Panc1 (cell line): ENCODE measurements at regions of chr12 and their contacts with region 1.

Region 1: GRCh38 chr12:32062881-32063280 is 43.8 kb upstream of the BICD1 start:
- DNase-seq: no peak
- ATAC-seq: no peak
- H3K4me3 ChIP-seq: no peak overlapping the region
- H3K27ac ChIP-seq: no peak overlapping the region
- H3K4me1 ChIP-seq: no peaks in the 10 kb centered on the region
- H3K27me3 ChIP-seq: no peaks in the 10 kb centered on the region
- CTCF ChIP-seq: no peak

Region 2: GRCh38 chr12:31651893-31652521 is 410.9 kb before region 1 on chr12:
- CTCF ChIA-PET with region 1: interaction called, 11 read pairs
- POLR2A ChIA-PET with region 1: no interaction called
- in situ Hi-C with region 1: no loop called
- intact Hi-C with region 1: no loop called
- DNase-seq: no peak
- ATAC-seq: no peak
- H3K4me3 ChIP-seq: peak overlapping the region in 1 of 2 experiments; percentile 27; a peak in 1 of 4 replicates
- H3K27ac ChIP-seq: peak overlapping the region; percentile 72; the same call in 1 of the 2 replicates
- H3K4me1 ChIP-seq: 0 out of 2 replicates have a peak, but pooled peaks cover 3% of the 10 kb centered on the region
- H3K27me3 ChIP-seq: no peaks in the 10 kb centered on the region
- CTCF ChIP-seq: no peak

Region 3: DNA sequence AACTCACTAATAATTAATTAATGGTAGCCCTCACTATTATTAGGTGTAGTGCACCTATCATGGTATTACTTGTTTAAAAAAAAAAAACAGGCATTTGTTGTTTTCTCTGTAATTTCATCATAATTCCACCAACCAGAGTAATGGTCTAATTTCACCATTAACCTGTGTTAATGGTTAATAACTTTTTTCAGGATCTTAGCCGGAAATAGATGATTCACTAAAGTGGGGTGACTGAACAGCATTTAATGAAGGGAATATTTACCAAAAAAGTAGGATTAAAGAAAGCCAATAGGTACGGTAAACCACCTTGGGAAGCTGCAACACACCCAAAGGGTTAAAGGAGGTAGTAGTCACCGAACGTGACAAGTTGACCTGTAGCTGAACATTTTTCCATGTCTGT is 390.4 kb before region 1 on chr12:
- CTCF ChIA-PET with region 1: no interaction called
- POLR2A ChIA-PET with region 1: interaction called, 10 read pairs
- in situ Hi-C with region 1: no loop called
- intact Hi-C with region 1: no loop called
- DNase-seq: no peak
- ATAC-seq: no peak
- H3K4me3 ChIP-seq: no peak overlapping the region
- H3K27ac ChIP-seq: no peak overlapping the region
- H3K4me1 ChIP-seq: no peaks in the 10 kb centered on the region
- H3K27me3 ChIP-seq: no peaks in the 10 kb centered on the region
- CTCF ChIP-seq: no peak

Region 4: GRCh38 chr12:31682136-31682962 is 380.5 kb before region 1 on chr12:
- CTCF ChIA-PET with region 1: interaction called, 4 read pairs
- POLR2A ChIA-PET with region 1: no interaction called
- in situ Hi-C with region 1: no loop called
- intact Hi-C with region 1: loop called (anchors 5 kb)
- DNase-seq: peak; percentile 83
- ATAC-seq: peak; percentile 99
- H3K4me3 ChIP-seq: no peak overlapping the region
- H3K27ac ChIP-seq: no peak overlapping the region
- H3K4me1 ChIP-seq: no peaks in the 10 kb centered on the region
- H3K27me3 ChIP-seq: no peaks in the 10 kb centered on the region
- CTCF ChIP-seq: peak; percentile 94

Region 5: GRCh38 chr12:32002848-32003493 is 59.9 kb before region 1 on chr12:
- CTCF ChIA-PET with region 1: no interaction called
- POLR2A ChIA-PET with region 1: no interaction called
- in situ Hi-C with region 1: no loop called
- intact Hi-C with region 1: no loop called
- DNase-seq: no peak
- ATAC-seq: 0 out of 2 replicates have a peak, but pooled peaks have one; percentile 44
- H3K4me3 ChIP-seq: no peak overlapping the region
- H3K27ac ChIP-seq: no peak overlapping the region
- H3K4me1 ChIP-seq: no peaks in the 10 kb centered on the region
- H3K27me3 ChIP-seq: no peaks in the 10 kb centered on the region
- CTCF ChIP-seq: no peak

Region 6: GRCh38 chr12:32159925-32160324 is 97.0 kb after region 1 on chr12:
- CTCF ChIA-PET with region 1: no interaction called
- POLR2A ChIA-PET with region 1: no interaction called
- in situ Hi-C with region 1: no loop called
- intact Hi-C with region 1: no loop called
- DNase-seq: no peak
- ATAC-seq: no peak
- H3K4me3 ChIP-seq: no peak overlapping the region
- H3K27ac ChIP-seq: no peak overlapping the region
- H3K4me1 ChIP-seq: no peaks in the 10 kb centered on the region
- H3K27me3 ChIP-seq: no peaks in the 10 kb centered on the region
- CTCF ChIP-seq: no peak

Region 7: DNA sequence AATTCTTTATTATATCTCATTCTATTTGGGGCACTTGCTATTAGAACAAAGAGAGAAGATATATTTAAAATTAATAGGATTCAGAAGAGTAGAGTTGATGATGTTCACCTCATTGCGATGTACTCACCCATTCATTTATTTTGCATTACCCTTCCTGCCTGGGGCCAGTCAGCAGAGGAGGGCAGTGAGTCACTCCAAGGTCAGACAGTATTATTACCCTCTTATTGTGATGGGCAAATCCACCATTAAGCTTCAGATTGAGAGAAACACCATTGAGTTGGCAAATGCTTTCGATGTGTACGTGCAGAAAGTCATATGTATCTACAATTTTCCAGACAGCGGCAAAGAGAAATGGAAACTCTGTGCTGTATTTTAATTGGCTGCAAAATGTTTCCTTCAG is 177.9 kb after region 1 on chr12:
- CTCF ChIA-PET with region 1: no interaction called
- POLR2A ChIA-PET with region 1: no interaction called
- in situ Hi-C with region 1: no loop called
- intact Hi-C with region 1: no loop called
- DNase-seq: no peak
- ATAC-seq: no peak
- H3K4me3 ChIP-seq: no peak overlapping the region
- H3K27ac ChIP-seq: no peak overlapping the region
- H3K4me1 ChIP-seq: no peaks in the 10 kb centered on the region
- H3K27me3 ChIP-seq: no peaks in the 10 kb centered on the region
- CTCF ChIP-seq: no peak

Region 8: GRCh38 chr12:32312049-32312670 is 249.3 kb after region 1 on chr12:
- CTCF ChIA-PET with region 1: interaction called, 11 read pairs
- POLR2A ChIA-PET with region 1: interaction called, 3 read pairs
- in situ Hi-C with region 1: no loop called
- intact Hi-C with region 1: loop called (anchors 5 kb)
- DNase-seq: peak; percentile 45
- ATAC-seq: peak; percentile 77
- H3K4me3 ChIP-seq: no peak overlapping the region
- H3K27ac ChIP-seq: no peak overlapping the region
- H3K4me1 ChIP-seq: no peaks in the 10 kb centered on the region
- H3K27me3 ChIP-seq: no peaks in the 10 kb centered on the region
- CTCF ChIP-seq: peak; percentile 80; the same call in 1 of the 2 replicates